ENCODE measurements at regions of chr12 and their contacts with region 1.

Region 1: DNA sequence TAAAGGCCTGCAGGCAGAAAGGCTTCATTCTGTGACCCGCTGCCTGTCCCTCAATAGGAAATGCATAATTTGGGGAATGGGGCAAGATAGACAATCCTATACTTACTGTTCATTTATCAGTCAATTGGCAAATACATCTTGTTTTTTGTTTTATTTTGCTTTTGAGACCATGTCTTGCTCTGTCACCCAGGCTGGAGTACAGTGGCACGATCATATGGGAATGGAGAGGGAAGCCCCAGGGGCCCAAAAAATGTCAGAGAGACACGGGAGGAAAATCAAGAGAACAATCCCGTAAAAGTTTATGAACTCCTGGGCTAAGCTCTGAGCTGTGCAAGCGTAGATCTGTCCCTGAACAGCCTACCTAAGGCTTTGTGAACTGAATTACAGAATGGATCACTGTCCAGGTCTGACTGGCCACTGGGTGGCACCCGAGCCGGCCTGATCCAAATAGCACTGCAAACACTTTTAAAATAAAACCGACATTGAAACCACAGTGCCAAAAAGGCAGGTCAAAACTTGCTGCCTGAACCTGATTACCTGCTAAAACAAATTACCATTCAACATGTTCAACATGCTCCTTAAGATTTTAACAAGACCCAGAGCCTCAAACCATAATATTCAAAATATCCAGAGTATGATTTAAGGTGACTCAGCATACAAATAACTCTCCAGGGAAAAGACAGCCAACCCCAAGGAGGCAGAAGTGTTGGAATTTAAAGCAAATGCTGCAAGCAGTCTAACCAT is 11.8 kb downstream of the COPS7A start:
- DNase-seq: no peak
- H3K4me3 ChIP-seq: no peak overlapping the region
- CTCF ChIP-seq: peak; percentile 60

Region 2: GRCh38 chr12:6723607-6724396 is 11.8 kb before region 1 on chr12 and contains the start of gene COPS7A:
- CTCF ChIA-PET with region 1: interaction called, 38 read pairs
- POLR2A ChIA-PET with region 1: interaction called, 6 read pairs
- DNase-seq: peak; percentile 84
- H3K4me3 ChIP-seq: peak within 1 kb of the TSS; percentile 56
- CTCF ChIP-seq: no peak